AG04449 (cell line): ENCODE measurements at regions of chr7 and their contacts with region 1.

Region 1: DNA sequence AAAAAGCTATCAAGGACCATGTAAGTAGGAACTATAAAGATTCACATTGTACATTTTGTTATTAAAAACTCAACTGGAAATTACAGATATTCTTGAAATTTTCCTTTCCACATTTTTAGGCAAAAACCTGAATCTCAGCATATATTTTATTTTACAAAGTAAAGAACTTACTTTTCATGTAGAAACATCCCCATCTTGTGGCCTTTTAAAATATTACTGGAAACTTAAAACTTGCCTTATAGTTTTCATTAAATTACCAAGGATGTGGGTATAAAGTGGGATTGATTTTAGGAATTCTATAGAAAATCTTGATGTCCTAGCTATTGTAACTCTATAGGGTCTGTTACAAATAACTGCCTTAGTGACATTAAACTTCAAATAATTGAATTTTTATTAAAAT is 10.6 kb downstream of the DBF4 start:
- DNase-seq: no peak
- H3K4me3 ChIP-seq: no peak overlapping the region
- CTCF ChIP-seq: no peak

Region 2: GRCh38 chr7:87506246-87507180 is 380.4 kb before region 1 on chr7:
- CTCF ChIA-PET with region 1: interaction called, 46 read pairs
- POLR2A ChIA-PET with region 1: no interaction called
- DNase-seq: peak; percentile 5
- H3K4me3 ChIP-seq: no peak overlapping the region
- CTCF ChIP-seq: no peak

Region 3: DNA sequence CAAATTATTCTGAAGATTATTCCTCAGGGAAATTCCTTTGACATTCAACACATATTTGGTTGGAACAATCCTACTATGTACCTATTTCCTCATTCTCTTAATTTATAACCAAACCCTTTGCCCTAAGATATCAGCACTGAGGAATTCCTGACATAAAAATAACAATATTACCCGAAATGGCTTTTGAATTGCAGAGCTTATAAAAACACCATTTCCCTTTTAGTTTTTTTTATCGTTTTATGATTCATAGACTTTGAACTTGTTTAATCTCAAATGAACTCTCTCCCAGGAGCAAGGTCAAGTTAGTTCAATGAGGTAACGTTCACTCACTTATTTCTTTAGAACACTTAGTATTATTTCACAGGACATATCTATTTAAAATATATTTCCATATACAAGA is 278.4 kb before region 1 on chr7:
- CTCF ChIA-PET with region 1: no interaction called
- POLR2A ChIA-PET with region 1: no interaction called
- DNase-seq: no peak
- H3K4me3 ChIP-seq: no peak overlapping the region
- CTCF ChIP-seq: no peak

Region 4: GRCh38 chr7:87784423-87784822 is 102.5 kb before region 1 on chr7:
- CTCF ChIA-PET with region 1: interaction called, 20 read pairs
- POLR2A ChIA-PET with region 1: no interaction called
- DNase-seq: no peak
- H3K4me3 ChIP-seq: no peak overlapping the region
- CTCF ChIP-seq: no peak

Region 5: DNA sequence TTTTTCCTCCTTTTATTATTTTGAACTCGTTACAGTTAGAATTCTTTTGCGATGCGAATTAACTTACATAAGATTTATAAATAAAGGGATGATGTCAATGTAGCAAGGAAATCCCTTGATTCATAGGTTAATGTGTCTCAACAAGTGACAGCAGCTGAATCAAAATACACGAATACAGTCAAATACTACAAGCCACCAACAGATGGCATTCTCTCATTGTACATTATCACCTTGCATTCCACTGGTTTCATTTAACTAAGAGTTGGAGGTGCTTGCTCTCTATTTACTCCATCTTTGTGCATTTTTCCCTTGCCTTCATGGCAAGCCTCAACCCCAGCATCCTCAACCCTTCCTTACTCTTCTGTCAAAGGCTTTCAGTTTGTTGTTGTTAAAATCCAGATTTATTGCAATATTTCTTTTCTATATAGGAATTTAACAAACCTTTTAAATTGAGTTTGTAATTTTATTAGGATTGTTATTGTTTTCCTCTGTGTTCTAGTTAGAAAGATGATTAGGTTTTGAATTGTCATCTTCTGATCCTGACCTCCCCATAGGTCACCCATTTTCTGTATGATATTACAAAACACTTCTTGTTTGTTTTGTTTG is 89.0 kb before region 1 on chr7:
- CTCF ChIA-PET with region 1: interaction called, 70 read pairs
- POLR2A ChIA-PET with region 1: no interaction called
- DNase-seq: peak; percentile 3
- H3K4me3 ChIP-seq: no peak overlapping the region
- CTCF ChIP-seq: peak; percentile 49

Region 6: GRCh38 chr7:87899258-87899657 is 12.4 kb after region 1 on chr7:
- CTCF ChIA-PET with region 1: interaction called, 10 read pairs
- POLR2A ChIA-PET with region 1: no interaction called
- DNase-seq: no peak
- H3K4me3 ChIP-seq: no peak overlapping the region
- CTCF ChIP-seq: no peak